Activated B cell treated with CpG ODN at 0.5 μM for 24 hours (primary cell): ENCODE measurements at regions of chr13 and their contacts with region 1.

Region 1: GRCh38 chr13:76991796-76992547 is at the start of gene CLN5:
- DNase-seq: peak; percentile 93
- ATAC-seq: peak; percentile 95
- H3K4me3 Mint-ChIP-seq: peak within 1 kb of the TSS; percentile 98
- H3K27ac Mint-ChIP-seq: peak within 1 kb of the TSS; percentile 97
- H3K4me1 Mint-ChIP-seq: peaks cover 34% of the 10 kb centered on the region
- H3K27me3 Mint-ChIP-seq: no peaks in the 10 kb centered on the region
- CTCF ChIP-seq: no peak
- total RNA-seq, gene CLN5: 20.6 and 23.6 TPM in 2 replicates

Region 2: GRCh38 chr13:76929320-76929719 is 62.7 kb before region 1 on chr13:
- CTCF ChIA-PET with region 1: no interaction called
- POLR2A ChIA-PET with region 1: no interaction called
- intact Hi-C with region 1: no loop called
- DNase-seq: no peak
- ATAC-seq: no peak
- H3K4me3 Mint-ChIP-seq: no peak overlapping the region
- H3K27ac Mint-ChIP-seq: no peak overlapping the region
- H3K4me1 Mint-ChIP-seq: no peaks in the 10 kb centered on the region
- H3K27me3 Mint-ChIP-seq: peaks cover 11% of the 10 kb centered on the region
- CTCF ChIP-seq: no peak

Region 3: DNA sequence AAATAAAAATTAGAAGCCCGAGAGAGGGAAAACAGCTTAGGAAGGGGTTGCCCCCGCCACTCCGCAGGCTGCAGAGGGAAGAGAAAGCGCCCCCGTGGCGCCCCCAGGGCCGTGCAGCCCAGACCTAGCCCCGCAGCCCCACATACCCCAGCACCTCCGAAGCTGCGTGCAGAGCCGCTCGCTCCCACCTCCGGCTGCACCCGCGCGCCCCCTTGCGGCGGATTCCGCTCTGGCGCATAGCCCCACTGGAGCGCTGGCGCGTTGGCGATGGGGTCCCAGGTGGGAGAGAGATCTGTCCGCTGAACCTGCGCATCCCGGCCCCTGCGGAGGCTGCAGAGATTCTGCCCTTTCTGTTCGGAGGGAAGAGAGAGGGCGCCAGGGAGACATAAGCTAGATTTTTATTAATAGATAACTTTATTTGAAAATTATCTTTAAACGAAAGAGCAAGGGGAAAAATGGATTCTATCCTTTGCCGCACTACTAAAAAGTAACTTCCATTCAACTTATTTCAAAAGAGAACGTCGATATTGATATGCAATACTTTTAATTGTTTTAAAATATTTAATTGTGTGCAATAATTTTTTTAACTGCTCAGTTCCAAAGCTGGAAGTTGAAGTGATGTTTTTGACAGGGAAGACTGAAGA is 11.8 kb before region 1 on chr13:
- CTCF ChIA-PET with region 1: interaction called, 8 read pairs
- POLR2A ChIA-PET with region 1: interaction called, 9 read pairs
- intact Hi-C with region 1: loop called (anchors 1 kb)
- DNase-seq: peak; percentile 84
- ATAC-seq: peak; percentile 100
- H3K4me3 Mint-ChIP-seq: peak overlapping the region; percentile 64
- H3K27ac Mint-ChIP-seq: no peak overlapping the region
- H3K4me1 Mint-ChIP-seq: peaks cover 2% of the 10 kb centered on the region
- H3K27me3 Mint-ChIP-seq: peaks cover 22% of the 10 kb centered on the region
- CTCF ChIP-seq: peak; percentile 96

Region 4: DNA sequence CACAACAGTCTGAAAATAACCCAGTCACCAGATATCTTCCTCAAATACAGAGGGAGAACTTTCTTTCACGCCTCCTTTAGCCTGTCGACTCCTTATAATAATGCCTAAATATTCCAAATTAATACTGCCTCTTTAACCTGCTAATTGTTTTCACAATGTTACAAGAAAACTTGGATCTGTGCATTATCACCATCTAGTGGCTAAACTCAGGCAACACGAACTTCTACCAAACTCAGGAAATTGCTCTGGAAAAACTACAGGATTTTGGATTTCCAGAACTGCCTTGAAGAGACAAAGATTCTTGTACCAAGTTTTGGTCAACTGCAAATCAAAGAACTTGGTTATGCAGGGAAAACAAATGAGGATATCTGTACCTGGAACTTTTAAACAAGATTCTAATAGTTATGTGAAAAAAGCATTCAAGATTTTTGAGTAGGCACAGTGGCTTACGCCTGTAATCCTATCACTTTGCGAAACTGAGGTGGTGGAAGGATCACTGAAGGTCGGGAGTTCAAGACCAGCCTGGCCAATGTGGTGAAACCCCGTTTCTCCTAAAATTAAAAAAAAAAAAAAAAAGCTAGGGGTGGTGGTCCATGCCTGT is 10.7 kb after region 1 on chr13:
- CTCF ChIA-PET with region 1: interaction called, 5 read pairs
- POLR2A ChIA-PET with region 1: interaction called, 11 read pairs
- intact Hi-C with region 1: no loop called
- DNase-seq: no peak
- ATAC-seq: no peak
- H3K4me3 Mint-ChIP-seq: no peak overlapping the region
- H3K27ac Mint-ChIP-seq: no peak overlapping the region
- H3K4me1 Mint-ChIP-seq: peaks cover 20% of the 10 kb centered on the region
- H3K27me3 Mint-ChIP-seq: no peaks in the 10 kb centered on the region
- CTCF ChIP-seq: no peak

Region 5: GRCh38 chr13:77009011-77009410 is 17.0 kb after region 1 on chr13:
- CTCF ChIA-PET with region 1: no interaction called
- POLR2A ChIA-PET with region 1: interaction called, 6 read pairs
- intact Hi-C with region 1: loop called (anchors 1 kb)
- DNase-seq: no peak
- ATAC-seq: peak; percentile 18
- H3K4me3 Mint-ChIP-seq: no peak overlapping the region
- H3K27ac Mint-ChIP-seq: no peak overlapping the region
- H3K4me1 Mint-ChIP-seq: peaks cover 2% of the 10 kb centered on the region
- H3K27me3 Mint-ChIP-seq: no peaks in the 10 kb centered on the region
- CTCF ChIP-seq: no peak

Region 6: DNA sequence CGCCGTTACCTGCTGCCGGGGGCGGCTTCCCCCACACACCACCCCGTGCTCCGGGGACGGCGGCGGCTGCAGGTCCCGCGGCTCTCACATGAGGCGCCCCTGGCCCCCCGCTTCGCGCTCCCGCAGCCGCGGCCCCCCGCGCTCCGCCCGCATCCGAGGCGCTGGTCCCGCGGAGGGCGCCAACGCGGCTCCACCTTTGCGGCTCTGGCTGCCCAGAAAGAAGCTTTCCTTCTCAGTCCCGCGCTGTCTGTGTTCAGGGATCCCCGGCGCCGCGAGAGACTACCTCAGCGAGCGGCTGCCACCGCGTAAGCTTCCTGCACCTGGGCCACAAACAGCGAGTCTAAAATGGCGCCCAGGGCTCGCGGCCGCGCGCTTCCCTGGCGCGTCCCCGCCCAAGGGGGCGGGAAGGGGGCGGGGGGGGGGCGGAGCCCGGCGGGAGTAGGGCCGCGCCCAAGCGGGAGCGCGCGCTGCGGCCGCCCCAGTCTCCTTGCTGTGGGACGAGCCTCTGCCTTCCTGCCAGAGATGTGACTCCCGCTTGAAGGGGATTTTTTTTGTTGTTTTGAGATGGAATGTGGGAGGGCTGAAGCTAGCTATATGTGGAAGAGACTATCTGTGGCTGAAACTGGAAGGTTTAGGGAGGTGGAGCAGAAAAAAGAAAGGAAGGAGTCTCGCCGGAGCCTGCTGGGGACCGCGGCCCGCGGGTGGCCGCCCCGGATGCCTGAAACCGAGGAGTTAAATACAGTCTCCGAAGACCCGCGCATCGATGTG is 35.0 kb after region 1 on chr13 and contains the start of gene FBXL3:
- CTCF ChIA-PET with region 1: interaction called, 7 read pairs
- POLR2A ChIA-PET with region 1: interaction called, 76 read pairs
- intact Hi-C with region 1: loop called (anchors 1 kb)
- DNase-seq: peak; percentile 73
- ATAC-seq: peak; percentile 59
- H3K4me3 Mint-ChIP-seq: peak within 1 kb of the TSS; percentile 98
- H3K27ac Mint-ChIP-seq: peak within 1 kb of the TSS; percentile 96
- H3K4me1 Mint-ChIP-seq: peaks cover 54% of the 10 kb centered on the region
- H3K27me3 Mint-ChIP-seq: no peaks in the 10 kb centered on the region
- CTCF ChIP-seq: no peak
- total RNA-seq, gene FBXL3: 46.2 and 49.8 TPM in 2 replicates

Region 7: GRCh38 chr13:77345150-77345780 is 353.3 kb after region 1 on chr13:
- CTCF ChIA-PET with region 1: no interaction called
- POLR2A ChIA-PET with region 1: no interaction called
- intact Hi-C with region 1: no loop called
- DNase-seq: no peak
- ATAC-seq: peak; percentile 77
- H3K4me3 Mint-ChIP-seq: peak overlapping the region; percentile 21
- H3K27ac Mint-ChIP-seq: peak overlapping the region; percentile 86
- H3K4me1 Mint-ChIP-seq: peaks cover 55% of the 10 kb centered on the region
- H3K27me3 Mint-ChIP-seq: no peaks in the 10 kb centered on the region
- CTCF ChIP-seq: no peak